Activated CD8-positive, alpha-beta T cell treated with anti-CD3 and anti-CD28 coated beads, Interleukin-2, amount 10 ng/mL, durations not matched to agents 7 days and 5 days (primary cell): ENCODE measurements at regions of chr1 and their contacts with region 1.

Region 1: DNA sequence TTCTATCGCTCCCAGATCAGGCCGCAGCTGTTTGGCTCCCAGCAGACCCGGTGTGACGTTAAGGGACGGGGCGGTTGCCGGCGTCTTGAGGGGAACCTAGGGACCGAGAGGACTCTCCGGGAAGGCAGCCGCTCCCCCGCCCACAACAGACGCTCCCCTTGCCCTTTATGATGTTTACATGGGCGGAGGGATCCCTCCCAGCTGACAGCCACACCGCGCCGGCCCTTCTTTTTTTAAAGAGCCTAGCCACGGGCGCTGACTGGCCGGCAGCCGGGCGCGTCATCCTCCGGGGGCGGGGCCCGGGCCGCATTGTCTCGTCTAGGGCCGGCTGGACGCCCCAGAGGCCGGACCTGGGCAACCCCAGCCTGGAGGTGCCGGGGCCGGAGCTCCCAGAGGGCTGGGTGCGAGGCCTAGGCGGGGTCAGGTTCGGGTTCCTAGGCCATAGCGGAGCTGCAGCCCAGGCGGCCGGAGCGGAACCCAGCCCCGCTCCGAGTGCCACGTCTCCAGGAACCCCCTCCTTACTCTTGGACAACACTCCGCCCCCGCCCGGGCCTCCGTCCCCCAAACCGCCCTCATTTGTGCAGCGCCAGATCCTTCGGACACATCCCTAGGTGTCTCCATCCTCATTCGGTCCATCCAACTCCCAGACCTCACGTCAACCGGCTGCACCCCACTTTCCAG is at the start of gene PCAT6:
- DNase-seq: peak; percentile 92
- ATAC-seq: peak; percentile 76
- H3K4me3 Mint-ChIP-seq: peak within 1 kb of the TSS; percentile 88
- H3K27ac Mint-ChIP-seq: peak within 1 kb of the TSS; percentile 86
- H3K4me1 Mint-ChIP-seq: peaks cover 39% of the 10 kb centered on the region
- H3K27me3 Mint-ChIP-seq: peaks cover 25% of the 10 kb centered on the region
- total RNA-seq, gene PCAT6: 0.83 TPM in 1 of 2 experiments, not detected in the other

Region 2: GRCh38 chr1:202835548-202836090 is 24.9 kb after region 1 on chr1:
- CTCF ChIA-PET with region 1: interaction called, 3 read pairs
- POLR2A ChIA-PET with region 1: interaction called, 10 read pairs
- DNase-seq: peak; percentile 70
- ATAC-seq: peak; percentile 87
- H3K4me3 Mint-ChIP-seq: peak overlapping the region; percentile 49
- H3K27ac Mint-ChIP-seq: peak overlapping the region; percentile 84
- H3K4me1 Mint-ChIP-seq: peaks cover 71% of the 10 kb centered on the region
- H3K27me3 Mint-ChIP-seq: no peaks in the 10 kb centered on the region